Left ventricle myocardium inferior (tissue), 1 donor: ENCODE measurements at regions of chr15 and their contacts with region 1.

Region 1: DNA sequence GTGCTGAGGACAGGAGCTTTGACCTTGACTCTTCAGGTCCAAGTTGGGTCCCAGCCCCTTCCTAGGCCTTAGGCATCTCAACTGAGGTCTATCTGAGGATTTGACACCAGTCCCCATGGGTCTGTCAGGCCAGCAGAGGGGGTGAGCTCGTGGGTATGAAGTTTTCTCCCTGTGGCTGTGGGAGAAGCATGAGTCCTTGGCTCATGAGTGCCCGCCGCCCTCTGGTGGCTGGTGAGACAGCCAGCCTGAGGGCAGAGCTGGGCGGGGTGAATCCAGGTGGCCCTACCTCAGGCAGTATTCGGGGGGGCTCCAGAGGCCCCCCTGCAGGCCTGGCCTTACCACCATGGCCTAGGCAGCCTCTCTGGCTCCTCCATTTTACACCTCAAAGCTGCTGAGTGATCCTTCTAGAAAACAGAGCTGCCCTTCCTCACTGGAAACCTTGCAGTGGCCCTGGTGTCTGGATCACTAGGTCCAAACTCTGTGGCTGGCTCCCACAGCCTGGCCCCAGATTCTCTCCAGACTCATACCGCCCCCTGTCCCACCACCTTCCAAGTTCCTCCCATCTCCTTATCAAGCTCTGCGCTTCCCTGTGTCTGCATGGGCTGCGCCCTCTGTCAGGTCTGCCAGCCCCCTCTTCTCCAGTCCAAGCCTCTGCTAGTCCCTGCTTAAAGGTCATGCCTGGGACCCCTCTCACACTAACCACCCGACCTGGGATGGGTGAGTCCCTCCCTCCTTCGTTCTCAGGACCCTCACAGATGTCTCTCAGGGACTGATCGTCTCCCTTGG is 16.1 kb downstream of the SH2D7 start:
- DNase-seq: peak; percentile 81
- H3K4me3 ChIP-seq: no peak overlapping the region
- H3K27ac ChIP-seq: no peak overlapping the region
- H3K4me1 ChIP-seq: peaks cover 2% of the 10 kb centered on the region
- H3K27me3 ChIP-seq: no peaks in the 10 kb centered on the region
- CTCF ChIP-seq: peak; percentile 98

Region 2: GRCh38 chr15:77966540-77967290 is 141.8 kb before region 1 on chr15:
- intact Hi-C with region 1: loop called (anchors 2 kb)
- DNase-seq: no peak
- H3K4me3 ChIP-seq: no peak overlapping the region
- H3K27ac ChIP-seq: no peak overlapping the region
- H3K4me1 ChIP-seq: peaks cover 5% of the 10 kb centered on the region
- H3K27me3 ChIP-seq: no peaks in the 10 kb centered on the region
- CTCF ChIP-seq: peak; percentile 88

Region 3: GRCh38 chr15:78000091-78000926 is 108.2 kb before region 1 on chr15:
- intact Hi-C with region 1: loop called (anchors 10 kb)
- DNase-seq: peak; percentile 67
- H3K4me3 ChIP-seq: no peak overlapping the region
- H3K27ac ChIP-seq: no peak overlapping the region
- H3K4me1 ChIP-seq: peaks cover 49% of the 10 kb centered on the region
- H3K27me3 ChIP-seq: no peaks in the 10 kb centered on the region
- CTCF ChIP-seq: peak; percentile 65

Region 4: GRCh38 chr15:78182821-78183220 is 74.3 kb after region 1 on chr15:
- intact Hi-C with region 1: no loop called
- DNase-seq: no peak
- H3K4me3 ChIP-seq: no peak overlapping the region
- H3K27ac ChIP-seq: no peak overlapping the region
- H3K4me1 ChIP-seq: no peaks in the 10 kb centered on the region
- H3K27me3 ChIP-seq: no peaks in the 10 kb centered on the region
- CTCF ChIP-seq: no peak

Region 5: GRCh38 chr15:78195735-78196201 is 87.3 kb after region 1 on chr15:
- intact Hi-C with region 1: loop called (anchors 5 kb)
- DNase-seq: no peak
- H3K4me3 ChIP-seq: no peak overlapping the region
- H3K27ac ChIP-seq: no peak overlapping the region
- H3K4me1 ChIP-seq: no peaks in the 10 kb centered on the region
- H3K27me3 ChIP-seq: no peaks in the 10 kb centered on the region
- CTCF ChIP-seq: peak; percentile 80

Region 6: GRCh38 chr15:78241007-78241406 is 132.5 kb after region 1 on chr15:
- intact Hi-C with region 1: loop called (anchors 5 kb)
- DNase-seq: peak; percentile 86
- H3K4me3 ChIP-seq: no peak overlapping the region
- H3K27ac ChIP-seq: no peak overlapping the region
- H3K4me1 ChIP-seq: peaks cover 9% of the 10 kb centered on the region
- H3K27me3 ChIP-seq: no peaks in the 10 kb centered on the region
- CTCF ChIP-seq: peak; percentile 92